GM10248 (cell line): ENCODE measurements at regions of chr6 and their contacts with region 1.

Region 1: DNA sequence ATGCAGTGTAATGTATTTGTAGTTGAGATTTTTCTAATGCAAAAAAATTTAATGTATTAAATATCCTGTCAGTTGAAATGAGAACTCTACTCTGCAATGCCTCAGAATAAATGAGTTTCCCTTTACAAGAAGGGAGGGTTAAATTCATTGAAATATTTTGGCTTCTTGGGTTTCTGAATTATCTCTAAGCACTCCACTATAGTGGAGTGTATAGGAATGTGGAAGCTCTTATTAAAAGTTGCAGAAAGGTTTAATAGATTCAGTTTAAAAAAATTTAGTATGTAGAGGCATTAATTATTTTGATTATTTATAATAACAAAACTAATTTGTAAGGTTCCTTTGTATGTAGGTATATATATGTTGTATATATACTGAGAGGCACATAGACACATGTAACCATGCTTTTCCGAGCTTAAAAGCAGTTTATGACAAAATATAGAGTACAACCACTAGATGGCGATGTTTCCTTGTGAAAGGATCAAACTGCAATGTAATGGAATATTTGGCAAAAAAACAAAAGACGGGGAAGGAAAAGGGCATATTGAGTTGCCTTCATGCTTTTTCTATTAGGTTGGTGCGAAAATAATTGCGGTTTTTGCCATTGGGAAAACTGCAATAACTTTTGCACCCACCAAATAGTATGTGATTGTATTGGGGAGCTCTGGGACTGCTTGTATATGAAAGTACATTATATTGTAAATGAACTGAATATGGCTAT is 144.2 kb downstream of the MYO6 start:
- DNase-seq: peak; percentile 23
- CTCF ChIP-seq: peak; percentile 64

Region 2: DNA sequence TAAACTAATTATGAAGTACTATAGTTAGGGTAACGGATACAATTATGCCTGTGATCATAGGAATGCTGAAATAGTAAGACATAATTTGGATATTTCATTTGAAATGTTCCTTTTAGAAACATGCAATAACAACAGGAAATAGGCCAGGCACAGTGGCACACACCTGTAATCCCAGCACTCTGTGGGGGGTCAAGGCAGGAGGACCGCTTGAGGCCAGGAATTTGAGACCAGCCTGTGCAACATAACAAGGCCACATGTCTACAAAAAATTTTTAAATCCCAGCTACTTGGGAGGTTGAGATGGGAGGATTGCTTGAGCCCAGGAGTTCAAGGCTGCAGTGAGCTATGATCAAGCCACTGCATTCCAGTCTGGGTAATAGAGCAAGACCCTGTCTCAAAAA is 169.8 kb before region 1 on chr6:
- CTCF ChIA-PET with region 1: no interaction called
- POLR2A ChIA-PET with region 1: no interaction called
- DNase-seq: no peak
- CTCF ChIP-seq: no peak

Region 3: DNA sequence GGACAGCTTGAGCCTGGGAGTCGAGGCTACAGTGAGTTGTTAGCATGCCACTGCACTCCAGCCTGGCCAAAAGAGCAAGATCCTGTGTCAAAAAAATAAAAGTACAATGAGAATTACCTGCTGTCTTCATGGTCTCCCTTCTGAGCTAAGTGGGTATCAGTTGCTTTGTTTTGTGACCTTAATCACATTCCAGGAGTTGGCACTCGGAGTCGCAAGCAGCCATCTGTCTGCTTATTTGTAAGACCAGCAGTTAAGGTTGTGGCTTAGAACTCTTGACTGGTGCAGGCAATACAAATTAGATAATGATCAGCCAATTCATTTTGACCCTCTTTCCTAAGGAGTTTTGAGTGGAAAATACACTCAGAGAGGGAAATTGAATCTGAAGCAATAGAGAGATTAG is 30.2 kb before region 1 on chr6:
- CTCF ChIA-PET with region 1: interaction called, 15 read pairs
- POLR2A ChIA-PET with region 1: no interaction called
- DNase-seq: no peak
- CTCF ChIP-seq: no peak

Region 4: DNA sequence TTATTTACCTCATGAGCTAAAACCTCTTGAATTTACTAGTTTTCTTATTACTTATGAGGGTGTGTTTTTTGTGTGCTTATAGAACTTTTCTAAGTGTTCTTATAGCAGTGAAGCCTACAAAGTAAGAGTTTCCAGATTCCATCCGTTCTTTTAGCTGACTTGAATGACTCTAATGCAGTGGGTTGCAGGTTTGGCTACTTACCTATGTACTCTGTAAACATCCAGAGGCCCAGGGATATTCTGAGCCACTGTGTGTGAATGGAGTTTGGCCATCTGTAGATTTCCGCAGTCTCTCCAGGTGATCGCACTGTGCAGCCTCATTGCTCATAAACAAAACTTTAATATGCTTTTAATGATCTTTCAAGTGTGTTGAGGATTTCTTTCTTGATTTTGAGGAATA is 13.7 kb after region 1 on chr6:
- CTCF ChIA-PET with region 1: interaction called, 56 read pairs
- POLR2A ChIA-PET with region 1: no interaction called
- DNase-seq: no peak
- CTCF ChIP-seq: no peak

Region 5: GRCh38 chr6:75922226-75922625 is 29.0 kb after region 1 on chr6:
- CTCF ChIA-PET with region 1: interaction called, 13 read pairs
- POLR2A ChIA-PET with region 1: no interaction called
- DNase-seq: no peak
- CTCF ChIP-seq: no peak

Region 6: DNA sequence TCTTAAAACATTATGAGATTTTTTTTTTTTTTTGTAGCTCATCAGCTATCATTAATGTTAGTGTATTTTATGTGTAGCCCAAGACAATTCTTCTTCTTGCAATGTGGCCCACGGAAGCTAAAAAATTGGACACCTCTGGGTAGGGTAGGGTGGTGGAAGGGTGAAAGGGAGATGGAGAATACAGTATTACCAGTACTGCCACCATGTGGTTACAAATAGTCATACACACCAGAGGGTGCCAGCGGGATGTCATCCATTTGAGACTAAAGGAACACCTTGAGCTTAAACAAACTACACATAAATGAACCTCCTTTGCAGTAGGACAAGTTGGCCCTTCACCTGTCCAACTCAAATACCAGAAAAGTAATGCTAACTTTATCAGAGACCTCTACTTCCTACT is 968.2 kb after region 1 on chr6:
- CTCF ChIA-PET with region 1: interaction called, 15 read pairs
- POLR2A ChIA-PET with region 1: no interaction called
- DNase-seq: no peak
- CTCF ChIP-seq: peak; percentile 33